Vagina (tissue), 2 donors: ENCODE measurements at regions of chr16 and their contacts with region 1.

Region 1: DNA sequence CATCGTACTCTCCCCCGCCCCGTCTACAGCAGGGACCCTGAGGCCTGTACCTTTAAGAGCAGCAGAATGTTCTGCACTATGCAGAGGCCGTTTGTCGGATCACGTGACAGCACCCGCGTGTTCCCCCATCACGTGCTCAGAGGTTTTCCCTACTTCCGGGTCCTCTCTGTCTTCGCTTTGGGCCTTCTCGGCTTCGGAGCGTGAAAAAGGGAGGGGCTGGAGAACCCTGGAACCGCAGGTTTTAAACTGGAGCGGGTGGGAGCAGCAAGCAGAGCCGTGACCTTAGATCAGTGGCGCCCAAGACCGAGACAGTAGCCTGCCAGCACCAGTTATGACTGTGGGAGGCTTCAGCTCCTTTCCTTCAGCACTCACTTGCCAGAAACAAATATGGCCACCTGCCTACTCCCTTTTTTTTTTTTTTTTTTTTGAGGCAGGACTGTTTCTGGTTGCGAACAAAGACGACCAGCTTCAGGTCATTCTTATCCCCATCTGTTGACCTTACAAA is at the start of gene CLN3:
- DNase-seq: peak in 1 of 2 donors; percentile 94
- H3K4me3 ChIP-seq: peak within 1 kb of the TSS; percentile 85 to 95
- H3K27ac ChIP-seq: peak within 1 kb of the TSS; percentile 80
- H3K4me1 ChIP-seq: peaks cover 22% of the 10 kb centered on the region
- H3K27me3 ChIP-seq: no peaks in the 10 kb centered on the region
- CTCF ChIP-seq: no peak
- POLR2A ChIP-seq: peak in 1 of 2 donors; percentile 36
- total RNA-seq, gene CLN3: 22.8 TPM

Region 2: GRCh38 chr16:28538733-28539596 is 46.9 kb after region 1 on chr16 and contains the start of gene NUPR1:
- intact Hi-C with region 1: loop called (anchors 5 kb)
- DNase-seq: peak in 1 of 2 donors; percentile 99
- H3K4me3 ChIP-seq: peak within 1 kb of the TSS; percentile 57 to 59
- H3K27ac ChIP-seq: peak within 1 kb of the TSS; percentile 92
- H3K4me1 ChIP-seq: peaks cover 33% of the 10 kb centered on the region
- H3K27me3 ChIP-seq: no peaks in the 10 kb centered on the region
- CTCF ChIP-seq: no peak
- POLR2A ChIP-seq: peak in 1 of 2 donors; percentile 82
- total RNA-seq, gene NUPR1: 62.1 TPM

Region 3: DNA sequence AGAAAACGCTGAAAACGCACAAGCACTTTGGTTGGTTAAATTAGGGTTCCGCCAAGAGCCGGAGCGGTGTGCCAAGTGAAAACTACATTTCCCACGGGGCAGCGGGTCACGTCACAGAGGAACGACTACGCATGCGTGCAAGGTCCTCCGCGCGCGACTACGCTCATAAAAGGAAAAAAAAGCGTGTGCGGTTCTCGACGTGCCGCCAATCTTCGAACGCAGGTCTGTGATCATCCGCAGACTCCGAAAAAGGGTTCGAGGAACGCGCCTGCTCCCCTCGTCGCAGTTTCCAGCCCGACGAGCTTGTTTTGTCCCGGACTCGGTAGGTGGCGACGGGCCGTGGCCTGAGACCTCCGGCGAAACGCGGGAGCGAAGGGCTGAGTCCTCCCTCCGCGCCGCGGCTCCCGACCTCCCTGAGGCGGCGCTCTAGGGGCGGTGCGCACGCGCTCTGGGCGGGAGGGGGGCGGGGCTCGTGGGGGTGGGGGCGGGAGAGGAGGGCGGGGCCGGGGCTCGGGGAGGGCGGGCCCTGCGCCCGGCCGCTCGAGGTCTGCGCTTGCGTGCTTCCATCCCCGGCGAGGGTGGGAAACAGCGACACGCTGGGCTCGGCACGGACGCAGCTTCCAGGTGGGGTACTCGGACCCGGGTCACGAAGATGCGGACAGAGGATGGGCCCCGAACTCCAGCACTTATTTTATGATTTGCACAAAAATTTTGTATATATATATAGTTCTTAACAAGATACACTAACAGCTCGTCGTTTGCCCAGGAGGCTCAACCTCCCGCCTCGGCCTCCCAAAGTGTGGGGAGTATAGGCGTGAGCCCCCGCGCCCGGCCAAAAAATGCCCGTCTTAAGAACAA is 62.0 kb after region 1 on chr16 and contains the start of gene SGF29:
- intact Hi-C with region 1: loop called (anchors 5 kb)
- DNase-seq: peak in 1 of 2 donors; percentile 94
- H3K4me3 ChIP-seq: peak within 1 kb of the TSS; percentile 56 to 77
- H3K27ac ChIP-seq: peak within 1 kb of the TSS; percentile 93
- H3K4me1 ChIP-seq: peaks cover 22% of the 10 kb centered on the region
- H3K27me3 ChIP-seq: no peaks in the 10 kb centered on the region
- CTCF ChIP-seq: no peak
- POLR2A ChIP-seq: peak in 1 of 2 donors; percentile 92
- total RNA-seq, gene SGF29: 16.5 TPM

Region 4: DNA sequence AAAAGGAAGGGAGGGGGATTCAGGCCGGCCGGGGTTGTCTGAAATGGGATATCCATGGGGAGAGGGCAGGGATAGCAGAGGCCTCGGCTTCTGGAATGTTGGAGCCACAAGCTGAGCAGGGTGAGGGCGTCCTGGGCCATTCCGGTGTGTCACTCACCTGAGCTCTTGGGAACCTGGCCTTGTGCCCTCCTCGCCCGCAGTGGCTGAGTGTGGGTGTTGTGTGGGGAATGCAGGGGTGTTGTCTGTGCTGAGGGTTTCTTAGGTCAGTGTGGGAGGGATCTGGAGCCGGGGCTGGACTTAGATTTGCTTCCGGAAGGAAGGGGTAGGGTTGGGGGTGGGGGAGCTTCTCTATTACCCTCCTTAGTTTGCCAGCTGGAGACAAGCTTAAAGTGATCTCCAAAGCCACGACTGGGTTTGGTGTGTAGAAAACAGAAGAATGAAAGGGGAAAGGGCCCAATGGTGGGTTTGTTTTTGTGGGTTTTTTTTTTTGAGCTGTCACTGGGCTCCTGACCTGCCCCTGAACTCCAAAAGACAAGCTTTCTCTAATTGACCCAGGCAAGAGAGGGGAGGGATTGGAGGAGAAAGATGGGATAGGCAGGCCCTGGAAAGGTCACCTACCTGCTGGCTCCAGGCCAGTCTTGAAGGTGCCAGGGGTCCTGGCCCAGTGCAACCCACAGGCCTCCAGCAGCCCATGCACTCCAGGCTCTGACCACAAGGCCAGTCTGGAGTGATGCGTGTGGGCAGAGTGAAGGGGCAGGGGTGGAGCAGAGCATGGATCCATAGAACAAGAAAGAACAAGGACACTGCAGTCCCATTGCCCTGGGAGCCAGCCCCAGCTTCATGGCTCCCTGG is 105.0 kb after region 1 on chr16 and contains the start of gene SULT1A2:
- intact Hi-C with region 1: no loop called
- DNase-seq: no peak
- H3K4me3 ChIP-seq: no peak within 1 kb of the TSS
- H3K27ac ChIP-seq: no peak within 1 kb of the TSS
- H3K4me1 ChIP-seq: no peaks in the 10 kb centered on the region
- H3K27me3 ChIP-seq: no peaks in the 10 kb centered on the region
- CTCF ChIP-seq: no peak
- POLR2A ChIP-seq: no peak
- total RNA-seq, gene SULT1A2: not detected